CD4-positive, alpha-beta memory T cell (primary cell): ENCODE measurements at regions of chr3 and their contacts with region 1.

Region 1: DNA sequence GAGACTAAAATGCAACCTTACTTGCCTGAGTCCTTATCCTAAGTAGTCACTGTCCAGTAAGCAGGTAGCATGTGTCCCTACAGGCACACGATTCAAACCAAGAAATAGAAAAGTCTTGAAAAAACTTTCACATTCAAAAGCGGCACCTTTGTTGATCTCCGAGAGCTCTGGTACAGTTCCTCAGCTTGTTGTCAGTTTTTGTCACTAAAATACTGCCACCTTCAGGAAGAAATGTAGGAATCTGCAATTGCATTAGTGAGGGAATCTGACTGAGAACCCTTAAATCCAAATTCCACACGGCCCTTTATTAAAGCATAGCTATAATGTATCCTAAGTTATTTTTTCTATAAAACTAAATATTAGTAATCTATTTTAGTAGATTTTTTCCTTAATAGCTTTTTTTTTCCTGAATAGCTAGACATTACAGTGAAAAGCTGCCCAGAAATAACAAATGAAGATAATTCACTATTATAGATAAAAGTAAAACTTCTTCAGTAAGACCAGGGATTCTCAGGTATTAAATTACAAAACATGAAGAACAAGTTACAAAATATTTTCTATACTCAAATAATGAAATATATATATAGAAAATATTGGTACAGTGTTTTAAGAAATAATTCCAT is 44.0 kb downstream of the CCDC54 start:
- DNase-seq: peak; percentile 38 to 59 (median 47)
- H3K4me3 ChIP-seq: no peak overlapping the region
- H3K4me3 Mint-ChIP-seq: peak overlapping the region in 7 of 8 donors; percentile 17 to 81 (median 60)
- H3K27ac ChIP-seq: no peak overlapping the region
- H3K27ac Mint-ChIP-seq: peak overlapping the region in 2 of 7 donors; percentile 4 to 83
- H3K4me1 ChIP-seq: no peaks in the 10 kb centered on the region
- H3K4me1 Mint-ChIP-seq: peaks cover 0 to 3% (median 3%) of the 10 kb centered on the region in 4 donors
- H3K27me3 ChIP-seq: no peaks in the 10 kb centered on the region
- H3K27me3 Mint-ChIP-seq: peaks cover 1 to 6% of the 10 kb centered on the region in 2 donors

Region 2: GRCh38 chr3:107153981-107154380 is 267.3 kb before region 1 on chr3:
- CTCF ChIA-PET with region 1: no interaction called
- POLR2A ChIA-PET with region 1: no interaction called
- intact Hi-C with region 1: no loop called
- DNase-seq: no peak
- H3K4me3 ChIP-seq: no peak overlapping the region
- H3K4me3 Mint-ChIP-seq: no peak overlapping the region
- H3K27ac ChIP-seq: no peak overlapping the region
- H3K27ac Mint-ChIP-seq: no peak overlapping the region
- H3K4me1 ChIP-seq: no peaks in the 10 kb centered on the region
- H3K4me1 Mint-ChIP-seq: no peaks in the 10 kb centered on the region
- H3K27me3 ChIP-seq: no peaks in the 10 kb centered on the region
- H3K27me3 Mint-ChIP-seq: peaks cover 6% of the 10 kb centered on the region in 2 donors

Region 3: DNA sequence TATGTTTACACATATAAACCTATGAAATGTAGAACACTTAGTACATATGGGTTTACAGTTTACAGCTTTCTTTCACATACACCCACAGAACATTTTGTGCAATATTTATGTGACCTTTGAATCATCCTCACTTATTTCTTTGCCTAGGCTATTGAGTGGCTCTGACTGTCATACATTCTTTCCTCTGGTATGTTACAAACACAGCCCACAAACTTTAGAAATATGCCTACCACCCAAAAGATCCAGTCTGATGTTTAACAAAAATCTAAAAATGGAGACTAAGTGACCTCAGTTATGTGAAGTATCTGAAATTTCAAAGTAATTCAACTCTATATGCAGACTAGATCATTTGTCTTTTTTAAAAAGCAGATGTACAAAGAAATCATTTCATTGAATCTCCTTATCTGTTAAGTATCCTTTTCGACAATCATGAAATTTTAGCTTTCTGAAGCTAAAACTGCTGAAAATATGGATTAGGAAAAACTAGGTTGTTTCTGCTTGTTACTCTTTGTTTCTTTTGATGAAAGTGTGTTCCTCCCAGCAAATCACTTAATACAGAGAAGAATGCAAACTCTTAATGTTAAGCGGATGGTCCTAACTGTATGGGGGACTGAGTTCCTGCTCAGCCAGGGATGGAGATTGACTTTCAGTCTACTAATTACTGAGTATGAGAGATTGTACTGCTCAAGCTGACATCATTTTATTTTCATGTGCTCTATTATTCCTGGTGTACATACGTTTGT is 16.4 kb before region 1 on chr3:
- CTCF ChIA-PET with region 1: interaction called, 12 read pairs
- POLR2A ChIA-PET with region 1: no interaction called
- intact Hi-C with region 1: no loop called
- DNase-seq: no peak
- H3K4me3 ChIP-seq: no peak overlapping the region
- H3K4me3 Mint-ChIP-seq: no peak overlapping the region
- H3K27ac ChIP-seq: no peak overlapping the region
- H3K27ac Mint-ChIP-seq: no peak overlapping the region
- H3K4me1 ChIP-seq: no peaks in the 10 kb centered on the region
- H3K4me1 Mint-ChIP-seq: no peaks in the 10 kb centered on the region
- H3K27me3 ChIP-seq: no peaks in the 10 kb centered on the region
- H3K27me3 Mint-ChIP-seq: no peaks in the 10 kb centered on the region